Sciatic nerve (tissue), 2 donors: ENCODE measurements at regions of chr14 and their contacts with region 1.

Region 1: DNA sequence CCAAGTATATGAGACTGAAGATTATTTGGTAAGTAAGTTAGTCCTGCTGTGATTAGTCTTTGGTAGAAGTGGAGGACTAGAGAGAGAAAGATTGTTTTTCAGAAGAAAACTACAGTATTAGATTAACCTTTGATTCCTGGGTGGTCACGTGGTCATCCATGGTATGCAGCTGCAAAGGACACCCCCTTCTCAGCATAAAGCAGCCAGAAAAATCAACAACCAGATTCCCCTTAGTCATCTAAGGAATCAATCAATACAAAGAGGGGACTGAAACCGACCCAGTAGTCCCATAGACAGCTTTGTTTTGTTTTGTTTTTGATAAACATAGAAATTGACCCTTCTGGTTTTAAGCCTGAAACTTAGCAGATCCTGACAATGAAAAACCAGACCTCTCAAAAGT is 30.3 kb upstream of the MDGA2 start:
- DNase-seq: no peak
- ATAC-seq: no peak

Region 2: GRCh38 chr14:46432516-46432915 is 1273.2 kb before region 1 on chr14:
- intact Hi-C with region 1: loop called (anchors 5 kb)
- DNase-seq: no peak
- ATAC-seq: no peak